ENCODE measurements at regions of chr1 and their contacts with region 1.

Region 1: DNA sequence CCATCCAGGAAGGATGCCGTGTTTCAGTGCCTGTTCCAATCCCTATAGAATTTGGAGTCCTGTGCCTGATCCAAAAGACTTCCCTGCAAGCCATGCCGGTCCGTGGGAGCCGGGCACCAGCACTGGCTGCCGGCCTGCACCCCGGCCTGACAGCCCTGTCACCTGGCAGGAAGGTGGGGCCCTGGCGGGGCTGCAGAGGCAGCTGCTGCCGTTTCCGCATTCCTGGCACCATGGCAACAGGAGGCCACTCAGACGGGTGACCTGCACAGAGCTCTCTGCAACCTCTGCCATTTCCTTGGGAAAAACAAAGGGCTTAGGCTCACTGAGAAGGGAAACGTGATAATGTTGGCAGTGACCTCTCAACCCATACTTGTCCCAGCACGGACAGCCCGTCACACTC is 63.2 kb upstream of the TMEM51 start:
- DNase-seq: no peak

Region 2: DNA sequence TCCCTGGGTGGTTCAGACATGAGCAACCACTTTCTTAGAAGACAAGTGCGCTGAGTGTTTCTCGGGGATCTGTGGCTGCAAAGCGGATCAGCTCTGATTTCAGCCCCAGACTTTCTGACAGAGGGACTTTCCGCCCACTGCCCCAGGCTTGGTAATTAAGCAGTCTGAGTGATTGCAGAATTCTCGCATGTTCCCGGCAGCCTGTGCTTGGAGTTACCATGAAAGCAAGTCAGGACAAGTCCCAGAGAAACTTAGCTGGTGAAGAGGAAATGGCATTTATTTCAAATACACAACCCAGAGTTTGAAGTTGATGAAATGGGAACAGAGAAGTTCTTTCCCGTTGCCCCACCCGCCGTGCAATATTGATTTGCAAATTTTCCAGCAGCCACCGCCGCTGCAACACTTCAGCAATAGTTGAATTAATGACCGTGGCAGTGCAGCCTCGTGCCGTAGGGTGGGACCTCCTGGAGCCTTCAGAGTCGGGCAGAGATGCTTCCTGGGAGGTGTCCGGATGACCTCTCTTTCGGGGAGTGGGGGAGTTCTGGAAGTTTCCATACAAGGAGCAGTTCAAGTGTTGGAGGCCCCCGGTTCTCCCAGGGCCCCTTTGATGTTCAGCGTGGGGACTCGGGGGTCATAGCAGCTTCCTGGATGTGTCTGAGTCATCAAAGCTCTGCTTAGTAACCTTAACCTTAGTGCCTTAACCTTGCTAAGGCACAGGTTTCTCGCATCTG is 357.2 kb before region 1 on chr1:
- in situ Hi-C with region 1: no loop called
- DNase-seq: no peak

Region 3: GRCh38 chr1:14755518-14756252 is 334.7 kb before region 1 on chr1:
- in situ Hi-C with region 1: loop called (anchors 25 kb)
- DNase-seq: no peak

Region 4: GRCh38 chr1:14787604-14788003 is 302.8 kb before region 1 on chr1:
- in situ Hi-C with region 1: no loop called
- DNase-seq: no peak

Measured in SK-MEL-5 (cell line).